Caco-2 (cell line): ENCODE measurements at regions of chr1 and their contacts with region 1.

Region 1: DNA sequence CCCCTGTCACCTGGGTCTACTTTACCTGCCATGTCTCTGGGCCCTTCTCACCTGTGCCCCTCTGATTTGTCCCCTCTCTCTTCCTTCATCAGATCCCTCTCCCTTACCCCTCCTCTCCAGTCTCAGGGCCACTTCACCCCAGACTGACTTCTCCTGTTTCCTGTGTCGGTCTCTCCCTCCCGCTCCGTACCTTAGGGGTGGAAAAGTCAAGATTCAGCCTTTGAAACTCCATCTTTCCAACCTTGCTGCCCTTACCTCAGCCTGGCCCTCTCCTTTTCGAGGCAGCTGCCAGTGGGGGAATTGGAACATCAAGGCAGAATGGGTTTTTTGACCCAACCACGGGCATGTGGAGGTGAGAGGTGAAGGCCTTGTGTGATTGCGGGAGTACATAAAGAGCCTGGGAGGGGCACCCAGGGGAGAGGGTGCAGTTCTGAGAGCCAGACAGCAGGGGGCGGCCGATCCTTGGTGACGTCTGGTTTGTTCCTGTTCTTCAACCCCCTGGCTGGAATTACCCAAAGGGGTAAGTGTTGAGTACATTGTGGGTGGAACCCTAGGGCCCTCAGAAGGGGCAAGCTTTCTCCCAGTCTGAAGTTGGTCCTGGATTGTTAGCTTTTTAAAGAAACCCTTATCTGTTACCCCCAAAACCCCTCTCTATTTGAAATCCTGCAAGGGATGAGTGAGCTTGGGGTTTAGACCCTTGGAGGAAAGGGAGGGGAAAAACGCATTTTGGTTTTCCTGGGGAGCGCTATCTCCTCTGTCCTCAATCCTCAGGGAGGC is 12.3 kb upstream of the DMBX1 start:
- DNase-seq: peak; percentile 61 to 79
- H3K4me3 ChIP-seq: no peak overlapping the region
- H3K4me3 Mint-ChIP-seq: no peak overlapping the region
- H3K27ac Mint-ChIP-seq: no peak overlapping the region
- H3K4me1 ChIP-seq: no peaks in the 10 kb centered on the region
- H3K4me1 Mint-ChIP-seq: no peaks in the 10 kb centered on the region
- H3K27me3 ChIP-seq: no peaks in the 10 kb centered on the region
- H3K27me3 Mint-ChIP-seq: peaks cover 4% of the 10 kb centered on the region
- CTCF ChIP-seq: peak; percentile 84

Region 2: DNA sequence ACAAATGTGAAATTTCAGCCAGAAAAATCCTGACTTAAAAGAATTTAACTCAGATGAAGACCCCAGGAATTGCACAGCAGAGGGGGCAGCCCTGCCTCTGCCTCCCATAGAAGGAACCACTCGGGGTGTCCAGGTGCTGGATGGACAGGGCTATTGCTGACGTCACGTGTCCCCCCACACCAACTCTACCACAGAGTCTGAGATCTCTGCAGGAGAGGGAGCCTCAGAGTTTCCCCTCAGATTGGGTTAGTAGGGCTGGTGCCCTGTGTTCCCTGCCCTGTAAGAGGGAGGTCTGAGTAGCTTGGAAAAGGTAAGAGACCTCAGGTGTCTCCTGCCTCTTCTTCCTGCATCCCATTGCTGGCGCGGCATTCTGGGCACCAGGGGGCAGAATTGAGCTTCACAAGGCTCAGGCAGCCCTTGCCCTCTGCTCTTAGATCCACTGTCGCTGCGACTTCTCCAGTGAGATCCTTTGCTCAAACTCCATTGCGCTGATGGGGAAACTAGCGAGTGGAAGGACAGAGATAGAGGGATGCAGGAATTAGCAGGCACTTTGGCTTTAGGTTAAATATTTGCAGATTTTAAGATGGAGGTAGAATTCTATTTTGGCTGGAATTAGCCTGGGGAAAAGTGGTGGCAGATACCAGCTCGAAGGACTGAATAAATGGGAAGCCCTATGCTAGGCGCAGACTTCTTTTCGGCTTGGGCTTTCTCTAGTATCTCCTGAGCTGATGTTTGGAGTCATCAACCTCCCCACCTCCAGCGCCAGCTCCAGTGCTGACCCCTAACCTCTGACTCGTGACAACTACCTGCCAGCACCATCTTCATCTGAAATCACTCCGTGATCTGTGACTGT is 30.5 kb before region 1 on chr1:
- CTCF ChIA-PET with region 1: interaction called, 3 read pairs
- POLR2A ChIA-PET with region 1: no interaction called
- intact Hi-C with region 1: loop called (anchors 1 kb)
- DNase-seq: peak; percentile 77 to 84
- H3K4me3 ChIP-seq: no peak overlapping the region
- H3K4me3 Mint-ChIP-seq: no peak overlapping the region
- H3K27ac Mint-ChIP-seq: no peak overlapping the region
- H3K4me1 ChIP-seq: 0 out of 2 replicates have a peak, but pooled peaks cover 4% of the 10 kb centered on the region
- H3K4me1 Mint-ChIP-seq: peaks cover 5% of the 10 kb centered on the region
- H3K27me3 ChIP-seq: no peaks in the 10 kb centered on the region
- H3K27me3 Mint-ChIP-seq: peaks cover 4% of the 10 kb centered on the region
- CTCF ChIP-seq: peak; percentile 79 to 83

Region 3: DNA sequence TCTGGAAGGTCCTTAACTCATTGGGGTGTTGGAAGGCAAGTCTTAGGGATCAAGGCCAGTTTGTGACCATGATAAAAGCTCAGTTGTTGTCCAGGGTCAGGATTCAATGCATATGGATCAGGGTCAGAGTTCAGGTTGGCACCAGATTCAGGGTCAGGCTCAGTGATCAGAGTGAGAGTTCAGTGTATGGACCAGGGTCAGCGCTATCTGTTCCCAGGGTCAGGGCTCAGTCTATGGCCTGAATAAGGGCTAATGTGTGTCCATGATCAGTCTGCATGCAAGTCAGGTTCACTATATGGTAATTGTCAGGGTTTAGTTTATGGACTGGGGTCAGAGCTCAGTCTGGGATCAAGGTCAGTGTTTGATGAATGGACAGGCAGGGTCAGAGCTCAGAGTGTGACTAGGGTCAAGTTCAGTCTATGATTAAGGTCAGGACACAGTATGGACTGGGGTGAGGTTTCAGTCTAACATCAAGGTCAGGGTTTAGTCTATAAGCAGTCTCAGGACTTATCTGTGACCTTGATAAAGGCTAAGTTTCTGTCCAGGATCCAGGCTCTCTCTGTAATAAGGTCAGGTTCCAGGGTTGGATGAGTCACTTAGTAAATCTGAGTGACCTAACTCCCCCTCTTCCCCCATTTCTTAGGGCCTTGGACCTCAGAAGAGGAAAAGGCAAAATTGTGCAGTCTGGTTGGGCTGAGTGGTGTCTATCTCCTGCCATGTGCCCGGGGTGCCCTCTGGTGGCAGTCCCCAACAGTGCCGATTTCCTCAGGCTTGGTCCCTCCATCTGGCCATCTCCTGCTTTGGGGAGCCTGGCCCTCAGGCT is 50.3 kb after region 1 on chr1:
- CTCF ChIA-PET with region 1: interaction called, 3 read pairs
- POLR2A ChIA-PET with region 1: no interaction called
- intact Hi-C with region 1: loop called (anchors 1 kb)
- DNase-seq: peak; percentile 65 to 81
- H3K4me3 ChIP-seq: no peak overlapping the region
- H3K4me3 Mint-ChIP-seq: no peak overlapping the region
- H3K27ac Mint-ChIP-seq: no peak overlapping the region
- H3K4me1 ChIP-seq: no peaks in the 10 kb centered on the region
- H3K4me1 Mint-ChIP-seq: peaks cover 6% of the 10 kb centered on the region
- H3K27me3 ChIP-seq: no peaks in the 10 kb centered on the region
- H3K27me3 Mint-ChIP-seq: peaks cover 8% of the 10 kb centered on the region
- CTCF ChIP-seq: peak; percentile 68 to 93

Region 4: GRCh38 chr1:46724991-46725735 is 247.8 kb after region 1 on chr1:
- CTCF ChIA-PET with region 1: no interaction called
- POLR2A ChIA-PET with region 1: no interaction called
- intact Hi-C with region 1: loop called (anchors 1 kb)
- DNase-seq: peak; percentile 58 to 61
- H3K4me3 ChIP-seq: no peak overlapping the region
- H3K4me3 Mint-ChIP-seq: no peak overlapping the region
- H3K27ac Mint-ChIP-seq: no peak overlapping the region
- H3K4me1 ChIP-seq: no peaks in the 10 kb centered on the region
- H3K4me1 Mint-ChIP-seq: no peaks in the 10 kb centered on the region
- H3K27me3 ChIP-seq: no peaks in the 10 kb centered on the region
- H3K27me3 Mint-ChIP-seq: no peaks in the 10 kb centered on the region
- CTCF ChIP-seq: peak; percentile 61 to 71